Heart left ventricle (tissue), 16 donors: ENCODE measurements at regions of chr14 and their contacts with region 1.

Region 1: DNA sequence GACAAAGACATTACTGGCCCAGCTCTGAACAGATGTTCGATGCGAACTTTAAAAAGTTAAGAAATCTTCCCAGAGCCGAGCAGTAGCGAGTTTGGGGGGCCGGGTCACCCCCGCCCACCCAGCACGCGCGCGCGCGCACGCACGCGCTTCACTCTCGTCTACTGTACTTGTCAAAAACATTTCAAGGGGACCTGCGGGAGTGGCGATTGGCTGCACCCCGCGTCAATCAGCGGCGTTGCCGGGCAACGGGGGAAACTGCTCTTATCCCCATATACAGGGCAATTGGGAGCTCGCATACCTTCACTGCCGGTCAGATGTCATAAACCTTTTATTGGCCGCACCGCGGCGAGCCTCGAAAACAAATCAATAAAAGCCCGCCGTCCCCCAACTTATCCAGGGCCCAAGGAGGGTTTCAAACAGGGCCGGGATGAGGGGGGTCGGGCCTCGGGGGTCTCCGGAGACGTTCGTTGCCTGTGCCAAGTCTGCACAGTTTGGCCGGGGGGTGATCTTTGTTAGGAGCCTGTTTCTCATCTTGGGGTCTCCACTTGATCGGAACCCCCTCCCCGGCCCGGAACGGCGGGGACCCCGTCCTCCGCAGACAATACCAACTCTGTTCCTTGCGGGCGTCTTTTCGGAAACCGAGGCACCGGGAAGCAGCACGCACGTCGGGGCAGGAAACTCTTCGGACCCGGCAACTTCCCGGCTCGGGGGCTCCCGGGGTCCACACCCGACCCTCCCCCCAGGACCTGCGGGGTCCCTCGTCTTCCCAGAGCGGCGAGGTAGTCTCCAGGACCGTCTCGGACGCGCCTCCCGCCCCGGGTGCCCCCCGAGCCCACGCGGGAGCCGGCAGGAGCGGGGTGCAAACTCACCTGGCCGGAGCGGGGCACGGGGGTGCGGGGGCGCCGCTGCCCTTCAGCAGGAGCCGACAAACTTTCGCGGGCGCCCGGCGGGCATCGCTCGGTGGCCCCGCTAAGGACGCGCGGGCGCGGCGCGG is 734 bp downstream of the FOXN3 start:
- DNase-seq: peak; percentile 97 to 100 (median 99)
- ATAC-seq: peak; percentile 85 to 92 (median 88)
- H3K4me3 ChIP-seq: peak overlapping the region; percentile 66 to 98 (median 94)
- H3K27ac ChIP-seq: peak overlapping the region; percentile 80 to 99 (median 94)
- H3K4me1 ChIP-seq: peaks cover 0 to 44% (median 30%) of the 10 kb centered on the region in 12 donors
- H3K27me3 ChIP-seq: no peaks in the 10 kb centered on the region
- CTCF ChIP-seq: no peak
- POLR2A ChIP-seq: peak in 1 of 2 donors; percentile 56

Region 2: GRCh38 chr14:89178802-89179535 is 237.3 kb before region 1 on chr14:
- intact Hi-C with region 1: loop called in 7 of 10 experiments (anchors 5 to 10 kb)
- DNase-seq: no peak
- ATAC-seq: no peak
- H3K4me3 ChIP-seq: no peak overlapping the region
- H3K27ac ChIP-seq: peak overlapping the region in 2 of 12 donors; percentile 19 to 38
- H3K4me1 ChIP-seq: peaks cover 0 to 43% (median 27%) of the 10 kb centered on the region in 12 donors
- H3K27me3 ChIP-seq: no peaks in the 10 kb centered on the region
- CTCF ChIP-seq: no peak
- POLR2A ChIP-seq: no peak

Region 3: DNA sequence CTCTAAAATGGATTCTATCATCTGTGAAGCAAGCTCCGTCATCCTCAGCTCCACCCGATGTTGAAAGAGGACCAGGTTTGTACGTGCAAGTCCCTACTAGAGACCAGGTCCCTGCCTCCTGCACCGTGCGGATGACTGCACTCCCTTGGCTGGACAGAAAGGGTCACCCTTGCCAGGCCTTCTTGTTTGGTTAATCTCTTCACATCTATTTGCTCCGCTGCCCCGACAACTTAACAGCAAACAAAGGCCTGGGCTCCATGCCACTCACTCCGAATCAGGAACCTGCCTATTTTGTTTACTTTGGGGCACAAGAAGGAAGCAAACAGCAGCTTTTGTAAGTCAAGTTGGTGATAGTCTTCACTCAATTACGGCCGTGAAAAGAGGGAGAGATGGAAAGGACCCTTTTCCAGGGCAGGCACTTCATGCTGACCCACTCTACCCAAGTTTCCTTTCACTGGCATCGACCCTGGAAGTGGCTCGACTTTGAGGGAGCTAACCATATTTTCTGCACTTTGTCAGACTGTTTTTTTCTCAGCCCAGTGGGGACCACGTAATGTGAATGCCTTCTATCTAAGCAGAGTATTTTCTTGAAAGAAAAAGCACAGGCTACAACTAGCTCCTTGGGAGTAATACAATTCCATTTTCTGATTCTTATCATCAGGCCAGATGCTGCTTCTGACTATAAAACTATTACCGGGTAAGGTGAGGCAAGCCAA is 201.9 kb before region 1 on chr14:
- intact Hi-C with region 1: loop called in 1 of 10 experiments (anchors 2 kb)
- DNase-seq: peak; percentile 69 to 87 (median 73)
- ATAC-seq: peak; percentile 93 to 97 (median 96)
- H3K4me3 ChIP-seq: no peak overlapping the region
- H3K27ac ChIP-seq: peak overlapping the region in 7 of 12 donors; percentile 0 to 61 (median 53)
- H3K4me1 ChIP-seq: peaks cover 0 to 51% (median 22%) of the 10 kb centered on the region in 12 donors
- H3K27me3 ChIP-seq: no peaks in the 10 kb centered on the region
- CTCF ChIP-seq: peak in 9 of 12 donors; percentile 8 to 46 (median 30)
- POLR2A ChIP-seq: no peak

Region 4: DNA sequence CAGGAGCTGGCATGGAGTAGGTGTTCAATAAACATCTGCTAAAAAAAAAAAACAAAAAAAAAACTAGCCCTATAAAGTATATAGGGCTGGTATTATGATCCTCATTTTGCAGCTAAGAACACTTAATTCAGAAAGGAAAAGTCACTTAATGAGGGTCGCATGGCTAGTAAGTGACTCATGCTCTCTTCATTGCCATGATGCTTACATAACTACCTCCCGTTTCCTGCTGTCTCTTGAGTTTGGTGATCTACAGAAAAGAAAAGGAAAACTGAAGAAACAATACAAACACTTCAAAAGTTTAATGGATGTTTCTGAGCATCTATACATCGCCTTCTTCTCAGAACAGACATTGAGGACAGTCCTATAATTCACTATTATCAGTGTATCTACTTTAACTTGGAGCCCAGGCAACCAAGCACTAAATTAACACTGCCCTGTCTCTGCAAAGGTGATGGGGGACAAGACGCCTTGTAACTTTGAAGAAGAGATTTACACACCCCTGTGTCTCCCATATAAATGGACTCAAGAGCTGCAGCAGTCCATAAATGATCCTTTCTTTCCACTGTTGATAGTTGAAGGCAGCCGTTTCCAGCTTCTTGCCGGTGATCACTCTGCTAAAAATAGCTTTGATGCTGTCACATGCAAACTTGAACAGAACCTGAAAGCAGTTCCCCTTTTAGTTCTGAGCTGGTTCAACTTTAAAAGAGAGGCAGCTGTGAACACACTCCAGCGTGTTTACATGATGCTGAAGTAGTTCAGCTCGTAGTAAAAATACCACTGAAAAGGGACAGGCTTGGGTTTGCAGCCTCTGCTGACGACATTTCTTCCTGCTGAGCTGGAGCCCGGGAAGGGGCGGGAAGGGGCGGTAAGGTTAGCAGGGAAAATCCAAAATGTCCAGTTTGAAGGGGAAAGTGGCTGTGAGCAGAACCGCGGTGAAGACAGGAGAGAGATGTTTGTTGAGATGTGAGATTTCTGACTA is 112.6 kb before region 1 on chr14:
- intact Hi-C with region 1: loop called in 7 of 10 experiments (anchors 5 to 10 kb)
- DNase-seq: peak in 4 of 5 donors; percentile 54 to 76 (median 68)
- ATAC-seq: peak; percentile 79 to 89 (median 85)
- H3K4me3 ChIP-seq: peak overlapping the region in 9 of 12 donors; percentile 13 to 38 (median 29)
- H3K27ac ChIP-seq: peak overlapping the region; percentile 63 to 95 (median 91)
- H3K4me1 ChIP-seq: peaks cover 10 to 63% (median 43%) of the 10 kb centered on the region in 12 donors
- H3K27me3 ChIP-seq: no peaks in the 10 kb centered on the region
- CTCF ChIP-seq: no peak
- POLR2A ChIP-seq: no peak

Region 5: DNA sequence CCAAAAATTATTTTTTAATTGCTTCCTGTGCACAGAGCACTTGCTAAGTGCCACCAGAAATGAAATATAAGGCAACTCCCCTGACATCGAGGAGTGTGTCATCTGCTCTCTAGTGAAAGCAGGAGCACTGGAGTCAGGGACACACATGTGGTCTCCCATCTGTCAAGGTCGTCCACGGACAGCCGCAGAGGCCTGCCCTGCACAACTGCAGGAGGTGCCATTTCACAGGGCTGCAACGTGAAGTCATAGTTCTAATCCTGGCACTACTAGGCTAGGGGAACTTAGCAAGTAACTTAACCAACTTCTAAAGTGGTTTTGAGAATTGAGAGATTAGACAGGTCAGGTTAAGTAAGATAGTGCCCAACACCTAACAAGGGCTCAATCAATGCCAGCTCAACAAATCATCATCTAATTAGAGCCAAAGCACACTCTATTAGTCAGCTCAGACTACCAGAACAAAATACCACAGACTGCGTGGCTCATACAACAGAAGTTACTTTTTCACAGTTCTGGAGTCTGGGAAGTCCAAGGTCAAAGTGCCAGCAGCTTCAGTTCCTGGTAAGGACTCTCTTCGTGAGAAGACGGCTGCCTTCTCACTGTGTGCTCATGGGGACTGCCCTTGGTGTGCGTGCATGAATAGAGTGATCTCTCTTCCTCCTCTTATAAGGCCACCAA is 29.9 kb before region 1 on chr14:
- intact Hi-C with region 1: no loop called
- DNase-seq: peak in 2 of 5 donors; percentile 68 to 83
- ATAC-seq: peak; percentile 63 to 91 (median 80)
- H3K4me3 ChIP-seq: no peak overlapping the region
- H3K27ac ChIP-seq: peak overlapping the region in 9 of 12 donors; percentile 31 to 82 (median 53)
- H3K4me1 ChIP-seq: peaks cover 3 to 72% (median 33%) of the 10 kb centered on the region in 12 donors
- H3K27me3 ChIP-seq: no peaks in the 10 kb centered on the region
- CTCF ChIP-seq: no peak
- POLR2A ChIP-seq: no peak

Region 6: DNA sequence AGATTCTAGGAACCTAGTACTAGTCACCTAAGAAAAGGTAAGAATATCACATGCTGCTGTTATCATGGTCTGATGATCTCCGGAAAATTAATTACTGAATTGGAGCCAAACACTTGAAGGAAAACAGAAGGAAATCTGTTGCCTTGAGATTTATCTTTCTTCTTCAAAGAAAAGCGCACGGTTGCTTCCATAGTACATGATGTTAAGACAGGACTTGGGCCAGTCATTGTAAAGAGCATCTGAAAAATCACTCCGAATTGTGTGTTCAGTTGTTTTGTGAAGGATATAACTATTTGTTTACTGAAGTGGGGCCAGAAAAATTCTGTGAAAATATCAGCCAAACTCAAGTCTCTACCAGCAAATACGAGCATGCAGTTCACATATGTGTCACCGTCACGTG is 135.7 kb after region 1 on chr14:
- intact Hi-C with region 1: no loop called
- DNase-seq: no peak
- ATAC-seq: peak in 2 of 4 donors; percentile 34 to 70
- H3K4me3 ChIP-seq: no peak overlapping the region
- H3K27ac ChIP-seq: peak overlapping the region in 7 of 12 donors; percentile 7 to 51 (median 41)
- H3K4me1 ChIP-seq: peaks cover 0 to 32% (median 13%) of the 10 kb centered on the region in 12 donors
- H3K27me3 ChIP-seq: no peaks in the 10 kb centered on the region
- CTCF ChIP-seq: no peak
- POLR2A ChIP-seq: no peak

Region 7: DNA sequence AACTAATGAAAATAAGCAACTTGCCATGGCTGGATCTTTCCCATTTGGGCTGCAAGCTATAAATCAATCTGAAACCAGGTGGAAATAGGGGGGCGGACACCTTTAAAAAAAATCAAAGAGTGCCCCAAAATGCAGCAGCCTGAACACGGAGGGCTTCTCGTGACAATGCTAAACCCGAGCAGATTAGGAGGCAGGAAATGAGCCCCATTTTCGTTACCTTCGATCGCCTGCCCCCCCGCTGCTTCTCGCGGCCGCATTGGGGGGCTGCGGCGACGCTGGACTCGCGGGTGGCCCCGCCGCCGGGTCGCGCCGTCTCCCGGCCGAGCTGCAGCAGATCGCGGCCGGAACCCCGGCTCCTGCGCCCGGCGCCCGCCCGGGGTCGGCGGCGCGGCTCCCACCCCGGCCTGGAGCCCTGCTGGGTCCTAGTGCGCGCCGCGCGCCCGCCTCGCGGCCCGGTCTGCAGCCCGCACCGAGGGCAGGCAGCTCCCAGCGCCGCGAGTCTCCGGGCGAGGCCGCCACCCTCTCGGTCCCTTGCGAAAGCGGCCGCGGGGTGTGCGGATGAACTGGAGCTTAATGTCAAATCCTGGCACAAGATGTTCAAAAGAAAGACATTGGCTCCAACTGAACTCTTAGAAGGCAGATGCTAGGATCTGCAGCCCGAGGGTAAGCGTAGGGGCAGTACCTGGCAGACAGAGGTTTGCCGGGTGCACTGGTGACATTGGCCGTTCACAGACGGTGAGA is 202.7 kb after region 1 on chr14:
- intact Hi-C with region 1: loop called in 8 of 10 experiments (anchors 2 to 10 kb)
- DNase-seq: peak; percentile 72 to 90 (median 78)
- ATAC-seq: peak; percentile 81 to 97 (median 89)
- H3K4me3 ChIP-seq: peak overlapping the region; percentile 55 to 91 (median 80)
- H3K27ac ChIP-seq: peak overlapping the region; percentile 52 to 87 (median 82)
- H3K4me1 ChIP-seq: peaks cover 0 to 62% (median 33%) of the 10 kb centered on the region in 12 donors
- H3K27me3 ChIP-seq: no peaks in the 10 kb centered on the region
- CTCF ChIP-seq: peak in 2 of 12 donors; percentile 11 to 16
- POLR2A ChIP-seq: peak in 1 of 2 donors; percentile 51

Region 8: GRCh38 chr14:89767861-89768268 is 351.6 kb after region 1 on chr14:
- intact Hi-C with region 1: loop called in 3 of 10 experiments (anchors 5 to 10 kb)
- DNase-seq: peak in 1 of 5 donors; percentile 20
- ATAC-seq: peak; percentile 61 to 71 (median 62)
- H3K4me3 ChIP-seq: no peak overlapping the region
- H3K27ac ChIP-seq: no peak overlapping the region
- H3K4me1 ChIP-seq: peaks cover 0 to 11% (median 0%) of the 10 kb centered on the region in 12 donors
- H3K27me3 ChIP-seq: no peaks in the 10 kb centered on the region
- CTCF ChIP-seq: peak; percentile 47 to 71 (median 60)
- POLR2A ChIP-seq: no peak